ENCODE measurements at regions of chr7 and their contacts with region 1.

Region 1: GRCh38 chr7:104848138-104848990 is 165.6 kb upstream of the KMT2E start:
- DNase-seq: peak; percentile 87
- H3K4me3 Mint-ChIP-seq: no peak overlapping the region
- H3K27ac Mint-ChIP-seq: no peak overlapping the region
- H3K4me1 Mint-ChIP-seq: no peaks in the 10 kb centered on the region
- H3K27me3 Mint-ChIP-seq: peaks cover 19% of the 10 kb centered on the region

Region 2: GRCh38 chr7:104231054-104232046 is 617.0 kb before region 1 on chr7:
- intact Hi-C with region 1: loop called (anchors 1 kb)
- DNase-seq: peak; percentile 82
- H3K4me3 Mint-ChIP-seq: no peak overlapping the region
- H3K27ac Mint-ChIP-seq: no peak overlapping the region
- H3K4me1 Mint-ChIP-seq: peaks cover 2% of the 10 kb centered on the region
- H3K27me3 Mint-ChIP-seq: peaks cover 34% of the 10 kb centered on the region

Region 3: DNA sequence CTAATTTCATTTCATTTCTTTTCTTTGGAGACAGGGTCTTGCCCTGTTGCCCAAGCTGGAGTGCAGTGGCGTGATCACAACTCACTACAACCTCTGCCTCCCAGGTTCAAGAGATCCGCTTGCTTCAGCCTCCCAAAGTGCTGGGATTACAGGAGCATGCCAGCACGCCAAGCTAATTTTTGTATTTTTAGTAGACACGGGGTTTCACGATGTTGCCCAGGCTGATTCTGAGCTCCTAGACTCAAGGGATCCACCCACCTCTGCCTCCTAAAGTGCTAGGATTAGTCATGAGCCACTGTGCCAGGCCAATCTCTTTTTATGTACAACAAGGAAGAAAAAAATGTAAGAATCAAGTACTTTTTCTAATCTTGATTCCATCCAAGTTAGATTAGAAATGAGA is 154.9 kb after region 1 on chr7:
- intact Hi-C with region 1: no loop called
- DNase-seq: peak; percentile 69
- H3K4me3 Mint-ChIP-seq: peak overlapping the region; percentile 76
- H3K27ac Mint-ChIP-seq: peak overlapping the region; percentile 87
- H3K4me1 Mint-ChIP-seq: peaks cover 53% of the 10 kb centered on the region
- H3K27me3 Mint-ChIP-seq: no peaks in the 10 kb centered on the region

Measured in activated CD4-positive, alpha-beta T cell treated with anti-CD3 and anti-CD28 coated beads, Interleukin-2, amount 10 ng/mL, durations not matched to agents 24 days and 14 days (primary cell).